ENCODE measurements at regions of chr11 and their contacts with region 1.

Region 1: GRCh38 chr11:118198370-118198769 is 21.9 kb upstream of the SCN2B start:
- DNase-seq: peak; percentile 88
- H3K4me3 Mint-ChIP-seq: no peak overlapping the region
- H3K27ac Mint-ChIP-seq: peak overlapping the region; percentile 69
- H3K4me1 Mint-ChIP-seq: peaks cover 12% of the 10 kb centered on the region
- H3K27me3 Mint-ChIP-seq: no peaks in the 10 kb centered on the region

Region 2: GRCh38 chr11:117690484-117691217 is 507.7 kb before region 1 on chr11:
- CTCF ChIA-PET with region 1: no interaction called
- intact Hi-C with region 1: no loop called
- DNase-seq: no peak
- H3K4me3 Mint-ChIP-seq: no peak overlapping the region
- H3K27ac Mint-ChIP-seq: no peak overlapping the region
- H3K4me1 Mint-ChIP-seq: no peaks in the 10 kb centered on the region
- H3K27me3 Mint-ChIP-seq: peaks cover 4% of the 10 kb centered on the region

Region 3: DNA sequence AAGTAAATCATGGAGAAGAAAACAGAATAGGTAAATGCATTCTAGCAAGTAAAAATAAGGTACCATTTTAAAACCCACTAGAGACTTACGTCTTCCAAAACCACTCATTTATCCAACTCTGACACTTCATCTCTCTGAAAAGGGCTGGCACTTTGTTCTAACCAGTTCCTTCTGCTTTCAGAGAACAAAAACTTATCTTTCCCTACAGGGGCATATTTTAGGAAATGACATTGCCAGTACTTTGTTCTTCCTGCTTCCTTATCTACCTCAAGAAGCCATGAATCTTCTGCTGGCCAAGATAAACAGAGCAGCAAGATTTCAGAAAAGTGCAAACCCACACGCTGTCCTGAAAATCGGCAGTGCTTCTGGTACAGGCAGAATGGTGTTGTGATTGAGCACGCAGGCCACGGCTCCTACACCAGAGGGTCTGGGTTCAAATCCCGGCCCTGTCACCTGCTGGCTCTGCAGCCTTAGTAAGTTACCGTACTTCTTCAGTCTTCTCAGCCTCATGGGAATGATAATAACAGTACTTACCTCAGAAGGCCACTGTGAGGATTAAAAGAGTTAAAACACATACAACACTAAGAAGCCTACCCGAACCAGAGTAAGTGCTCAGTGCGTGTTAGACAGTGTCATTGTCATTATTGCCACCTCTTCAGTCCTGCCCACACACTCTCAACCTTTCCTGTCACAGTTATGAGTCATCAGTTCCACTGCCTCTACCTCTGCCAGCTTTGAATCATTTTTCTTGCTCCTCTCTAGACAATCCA is 42.8 kb after region 1 on chr11:
- CTCF ChIA-PET with region 1: interaction called, 30 read pairs
- intact Hi-C with region 1: loop called (anchors 1 kb)
- DNase-seq: peak; percentile 87
- H3K4me3 Mint-ChIP-seq: peak overlapping the region; percentile 77
- H3K27ac Mint-ChIP-seq: peak overlapping the region; percentile 99
- H3K4me1 Mint-ChIP-seq: peaks cover 91% of the 10 kb centered on the region
- H3K27me3 Mint-ChIP-seq: no peaks in the 10 kb centered on the region

Region 4: GRCh38 chr11:118263695-118264567 is 65.6 kb after region 1 on chr11 and contains the start of gene MPZL2:
- CTCF ChIA-PET with region 1: interaction called, 36 read pairs
- intact Hi-C with region 1: no loop called
- DNase-seq: peak; percentile 73
- H3K4me3 Mint-ChIP-seq: peak within 1 kb of the TSS; percentile 86
- H3K27ac Mint-ChIP-seq: peak within 1 kb of the TSS; percentile 68
- H3K4me1 Mint-ChIP-seq: peaks cover 39% of the 10 kb centered on the region
- H3K27me3 Mint-ChIP-seq: no peaks in the 10 kb centered on the region
- total RNA-seq, gene MPZL2: 25.3 to 28.4 TPM

Region 5: DNA sequence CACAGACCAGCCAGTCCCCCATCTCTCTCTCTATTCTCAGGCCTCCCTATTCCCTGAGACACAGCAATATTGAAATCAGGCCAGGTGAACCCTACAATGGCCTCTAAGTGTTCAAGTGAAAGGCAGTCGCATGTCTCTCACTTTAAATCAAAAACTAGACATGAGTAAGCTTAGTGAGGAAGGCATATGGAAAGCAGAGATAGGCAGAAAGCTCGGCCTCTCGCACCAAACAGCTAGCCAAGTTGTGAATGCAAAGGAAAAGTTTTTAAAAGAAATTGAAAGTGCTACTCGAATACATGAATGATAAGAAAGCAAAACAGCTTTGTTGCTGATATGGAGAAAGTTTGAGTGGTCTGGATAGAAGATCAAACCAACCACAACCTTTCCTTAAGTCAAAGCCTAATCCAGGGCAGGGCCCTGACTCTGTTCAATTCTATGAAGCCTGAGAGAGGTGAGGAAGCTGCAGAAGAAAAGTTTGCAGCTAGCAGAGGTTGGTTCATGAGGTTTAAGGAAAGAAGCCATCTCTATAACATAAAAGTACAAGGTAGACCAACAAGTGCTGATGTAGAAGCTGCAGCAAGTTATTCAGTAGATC is 85.5 kb after region 1 on chr11:
- CTCF ChIA-PET with region 1: interaction called, 35 read pairs
- intact Hi-C with region 1: no loop called
- DNase-seq: peak; percentile 55
- H3K4me3 Mint-ChIP-seq: no peak overlapping the region
- H3K27ac Mint-ChIP-seq: peak overlapping the region; percentile 75
- H3K4me1 Mint-ChIP-seq: peaks cover 51% of the 10 kb centered on the region
- H3K27me3 Mint-ChIP-seq: no peaks in the 10 kb centered on the region

Region 6: DNA sequence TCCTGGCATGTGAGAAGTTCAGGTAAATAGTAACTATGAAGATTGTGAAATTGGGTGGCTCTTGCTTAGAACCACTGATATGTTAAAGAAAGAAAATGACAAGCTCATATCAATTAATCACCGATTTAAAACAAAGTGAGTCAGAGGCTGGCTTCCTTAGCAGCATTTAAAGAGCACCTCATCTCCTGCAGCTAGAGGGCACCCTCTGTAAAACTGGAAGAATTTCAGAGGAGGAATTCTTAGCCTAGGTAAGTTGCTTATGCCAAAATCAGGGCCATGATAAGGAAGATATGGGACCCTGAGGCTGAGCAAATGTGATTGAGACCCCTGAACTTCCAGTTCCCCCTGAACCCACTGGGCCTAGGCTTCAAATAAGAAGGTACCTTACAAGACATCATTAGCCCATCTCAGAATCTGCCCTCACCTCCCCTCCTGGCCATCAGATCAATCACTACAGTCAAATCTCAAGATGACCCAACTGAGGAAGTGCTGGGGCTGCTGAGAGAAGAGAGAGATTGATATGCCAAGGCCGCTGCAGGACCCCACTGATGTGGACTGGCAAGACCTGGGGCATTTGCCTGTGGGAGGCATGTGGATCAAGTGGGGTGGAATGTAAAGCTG is 97.6 kb after region 1 on chr11:
- CTCF ChIA-PET with region 1: interaction called, 42 read pairs
- intact Hi-C with region 1: loop called (anchors 1 kb)
- DNase-seq: peak; percentile 76
- H3K4me3 Mint-ChIP-seq: no peak overlapping the region
- H3K27ac Mint-ChIP-seq: peak overlapping the region; percentile 8
- H3K4me1 Mint-ChIP-seq: peaks cover 15% of the 10 kb centered on the region
- H3K27me3 Mint-ChIP-seq: no peaks in the 10 kb centered on the region

Region 7: DNA sequence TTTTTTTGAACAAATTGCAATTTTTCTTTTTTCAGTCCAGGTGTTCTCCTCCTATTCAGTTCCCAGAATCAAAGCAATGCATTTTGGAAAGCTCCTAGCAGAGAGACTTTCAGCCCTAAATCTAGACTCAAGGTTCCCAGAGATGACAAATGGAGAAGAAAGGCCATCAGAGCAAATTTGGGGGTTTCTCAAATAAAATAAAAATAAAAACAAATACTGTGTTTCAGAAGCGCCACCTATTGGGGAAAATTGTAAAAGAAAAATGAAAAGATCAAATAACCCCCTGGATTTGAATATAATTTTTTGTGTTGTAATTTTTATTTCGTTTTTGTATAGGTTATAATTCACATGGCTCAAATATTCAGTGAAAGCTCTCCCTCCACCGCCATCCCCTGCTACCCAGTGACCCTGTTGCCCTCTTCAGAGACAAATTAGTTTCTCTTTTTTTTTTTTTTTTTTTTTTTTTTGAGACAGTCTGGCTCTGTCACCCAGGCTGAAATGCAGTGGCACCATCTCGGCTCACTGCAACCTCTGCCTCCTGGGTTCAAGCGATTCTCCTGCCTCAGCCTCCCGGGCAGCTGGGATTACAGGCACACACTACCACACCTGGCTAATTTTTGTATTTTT is 154.8 kb after region 1 on chr11:
- CTCF ChIA-PET with region 1: interaction called, 16 read pairs
- intact Hi-C with region 1: no loop called
- DNase-seq: no peak
- H3K4me3 Mint-ChIP-seq: no peak overlapping the region
- H3K27ac Mint-ChIP-seq: peak overlapping the region; percentile 80
- H3K4me1 Mint-ChIP-seq: peaks cover 24% of the 10 kb centered on the region
- H3K27me3 Mint-ChIP-seq: no peaks in the 10 kb centered on the region